MCF 10A (cell line): ENCODE measurements at regions of chr10 and their contacts with region 1.

Region 1: DNA sequence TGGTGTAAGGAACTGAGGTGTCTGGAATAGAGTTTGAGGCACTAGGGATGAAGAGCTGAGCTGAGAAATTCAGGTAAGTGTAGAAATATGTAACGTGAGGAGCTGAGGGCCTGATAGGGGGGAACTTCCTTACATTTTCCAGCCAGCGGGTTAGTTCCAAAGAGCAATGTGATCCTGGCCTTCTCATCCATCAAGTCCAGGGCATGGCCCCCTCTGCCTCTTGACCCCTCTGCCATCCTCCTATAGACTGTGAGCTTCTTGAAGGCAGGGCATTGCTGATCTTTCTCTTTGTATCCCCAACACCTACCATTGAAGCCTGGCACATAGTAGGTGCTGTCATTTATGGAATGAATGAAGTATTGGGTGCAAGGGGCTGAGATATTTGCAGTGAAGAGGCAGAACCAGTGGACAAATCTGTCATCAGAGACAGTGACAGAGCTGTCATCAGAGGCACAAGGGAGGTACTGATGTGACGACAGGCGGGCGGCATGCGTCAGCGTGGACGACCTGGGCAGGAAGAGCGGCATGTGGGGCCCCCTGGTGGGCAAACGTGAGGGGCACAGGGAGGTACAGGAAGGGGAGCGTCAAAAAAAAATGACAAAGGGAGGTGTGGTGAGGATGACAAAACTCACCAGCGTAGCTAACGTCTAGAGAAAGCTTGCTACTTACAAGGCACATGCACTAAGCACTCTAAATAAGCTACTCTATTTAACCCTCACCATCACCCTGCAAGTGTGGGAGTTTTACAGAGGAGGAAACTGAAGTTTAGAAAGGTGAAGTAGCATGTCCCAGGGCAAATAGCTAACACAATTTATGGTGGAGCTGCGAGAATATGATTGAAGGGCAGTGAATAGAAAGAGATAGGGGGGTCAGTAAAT is 5.2 kb upstream of the CAMK2G start:
- DNase-seq: peak; percentile 87
- H3K4me3 Mint-ChIP-seq: no peak overlapping the region
- H3K27ac Mint-ChIP-seq: no peak overlapping the region
- H3K4me1 Mint-ChIP-seq: peaks cover 27% of the 10 kb centered on the region
- H3K27me3 Mint-ChIP-seq: no peaks in the 10 kb centered on the region
- CTCF ChIP-seq: peak; percentile 87

Region 2: DNA sequence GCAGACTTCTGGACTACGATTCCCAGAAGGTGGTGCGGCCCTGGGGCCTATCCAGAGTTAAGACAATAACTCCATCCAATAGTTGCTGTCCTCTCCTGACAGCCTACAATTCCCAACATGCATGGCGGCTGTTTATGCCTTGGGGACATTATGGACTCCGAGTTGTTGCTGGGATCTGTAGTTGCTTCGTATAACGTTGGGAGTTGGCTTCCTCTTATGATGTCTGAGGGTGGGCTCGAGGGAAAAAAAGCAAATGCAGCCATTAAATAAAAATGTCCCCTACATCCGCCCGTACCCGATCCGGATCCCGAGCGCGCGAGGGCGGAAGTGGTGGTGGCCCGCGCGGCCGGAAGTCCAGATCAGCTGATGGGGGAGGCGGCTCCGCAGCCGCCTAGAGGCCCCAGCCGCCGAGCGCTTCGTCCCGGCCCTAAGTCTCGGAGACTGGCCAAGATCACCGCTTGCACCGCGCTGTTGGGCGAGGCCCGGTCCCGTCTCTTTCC is 94.3 kb before region 1 on chr10 and contains the start of gene ZSWIM8:
- CTCF ChIA-PET with region 1: interaction called, 4 read pairs
- POLR2A ChIA-PET with region 1: interaction called, 5 read pairs
- intact Hi-C with region 1: loop called (anchors 1 kb)
- DNase-seq: peak; percentile 95
- H3K4me3 Mint-ChIP-seq: peak within 1 kb of the TSS; percentile 78
- H3K27ac Mint-ChIP-seq: peak within 1 kb of the TSS; percentile 84
- H3K4me1 Mint-ChIP-seq: peaks cover 28% of the 10 kb centered on the region
- H3K27me3 Mint-ChIP-seq: no peaks in the 10 kb centered on the region
- CTCF ChIP-seq: no peak
- total RNA-seq, gene ZSWIM8: 84.2 and 112 TPM in 2 replicates

Region 3: GRCh38 chr10:73819513-73820093 is 59.9 kb before region 1 on chr10:
- CTCF ChIA-PET with region 1: interaction called, 12 read pairs
- POLR2A ChIA-PET with region 1: interaction called, 3 read pairs
- intact Hi-C with region 1: no loop called
- DNase-seq: peak; percentile 86
- H3K4me3 Mint-ChIP-seq: no peak overlapping the region
- H3K27ac Mint-ChIP-seq: peak overlapping the region; percentile 84
- H3K4me1 Mint-ChIP-seq: peaks cover 38% of the 10 kb centered on the region
- H3K27me3 Mint-ChIP-seq: no peaks in the 10 kb centered on the region
- CTCF ChIP-seq: peak; percentile 19

Region 4: DNA sequence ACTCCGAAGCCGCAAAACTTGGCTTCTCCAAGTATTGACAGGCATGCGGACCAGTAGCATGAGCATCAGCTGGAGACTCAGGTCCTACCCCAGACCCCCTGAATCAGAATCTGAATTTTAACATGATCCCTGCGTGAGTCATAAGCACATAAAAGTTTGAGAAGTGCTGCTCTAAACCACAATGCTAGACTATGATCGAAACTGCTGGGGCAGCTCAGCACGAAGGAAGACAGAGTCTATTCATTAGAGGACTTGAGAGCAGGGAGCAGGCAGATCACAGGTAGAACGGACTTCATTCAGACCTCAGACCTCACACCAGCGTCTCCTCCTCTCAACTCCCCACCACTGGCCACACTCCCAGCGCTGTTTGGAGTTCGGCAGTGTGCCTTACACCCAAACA is 22.1 kb before region 1 on chr10:
- CTCF ChIA-PET with region 1: interaction called, 98 read pairs
- POLR2A ChIA-PET with region 1: interaction called, 6 read pairs
- intact Hi-C with region 1: no loop called
- DNase-seq: no peak
- H3K4me3 Mint-ChIP-seq: no peak overlapping the region
- H3K27ac Mint-ChIP-seq: peak overlapping the region; percentile 35
- H3K4me1 Mint-ChIP-seq: no peaks in the 10 kb centered on the region
- H3K27me3 Mint-ChIP-seq: no peaks in the 10 kb centered on the region
- CTCF ChIP-seq: no peak

Region 5: DNA sequence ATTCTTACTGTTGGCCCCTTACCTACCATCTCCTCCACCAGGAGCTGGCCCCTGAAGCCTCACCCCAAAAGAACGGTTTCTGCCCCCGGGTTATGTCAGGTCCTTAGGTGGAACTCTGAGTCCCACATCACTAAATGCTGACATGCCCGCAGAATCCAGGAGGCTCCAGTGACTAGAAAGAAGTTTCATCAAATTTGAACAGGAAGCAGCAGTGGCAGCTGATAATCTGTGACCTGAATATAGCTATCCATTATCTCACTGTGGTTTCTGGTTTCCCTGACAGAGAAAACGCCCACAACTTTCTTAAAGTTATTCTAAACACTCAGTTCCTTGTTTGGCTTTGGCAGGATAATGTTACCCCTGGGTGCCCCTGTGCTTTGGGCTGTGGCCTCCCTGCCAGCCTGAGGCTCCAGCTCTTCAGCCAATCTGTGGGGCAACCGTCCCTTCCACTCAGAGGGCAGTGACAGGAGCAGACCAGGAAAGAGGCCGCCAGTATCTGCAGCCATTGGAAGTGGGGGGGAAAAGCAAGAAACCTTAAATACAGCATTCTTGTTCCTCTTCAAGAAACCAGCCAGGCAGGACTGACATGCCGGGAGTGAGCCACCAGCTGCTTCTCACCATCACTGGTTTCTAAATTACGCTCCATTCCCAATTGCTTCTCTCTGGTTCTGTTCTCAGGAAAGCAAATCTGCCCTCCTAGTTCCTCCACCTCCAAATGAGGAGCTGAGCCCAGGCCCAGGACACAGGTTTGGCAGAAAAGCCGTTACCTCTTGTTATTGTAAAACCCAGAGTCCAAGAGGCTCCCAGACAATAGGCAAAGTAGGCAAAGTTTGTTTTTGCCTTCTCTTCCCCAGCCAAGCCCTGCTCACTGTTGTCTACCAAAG is 77.2 kb after region 1 on chr10:
- CTCF ChIA-PET with region 1: interaction called, 10 read pairs
- POLR2A ChIA-PET with region 1: no interaction called
- intact Hi-C with region 1: no loop called
- DNase-seq: no peak
- H3K4me3 Mint-ChIP-seq: no peak overlapping the region
- H3K27ac Mint-ChIP-seq: no peak overlapping the region
- H3K4me1 Mint-ChIP-seq: peaks cover 4% of the 10 kb centered on the region
- H3K27me3 Mint-ChIP-seq: no peaks in the 10 kb centered on the region
- CTCF ChIP-seq: no peak